ENCODE measurements at regions of chr4 and their contacts with region 1.

Region 1: DNA sequence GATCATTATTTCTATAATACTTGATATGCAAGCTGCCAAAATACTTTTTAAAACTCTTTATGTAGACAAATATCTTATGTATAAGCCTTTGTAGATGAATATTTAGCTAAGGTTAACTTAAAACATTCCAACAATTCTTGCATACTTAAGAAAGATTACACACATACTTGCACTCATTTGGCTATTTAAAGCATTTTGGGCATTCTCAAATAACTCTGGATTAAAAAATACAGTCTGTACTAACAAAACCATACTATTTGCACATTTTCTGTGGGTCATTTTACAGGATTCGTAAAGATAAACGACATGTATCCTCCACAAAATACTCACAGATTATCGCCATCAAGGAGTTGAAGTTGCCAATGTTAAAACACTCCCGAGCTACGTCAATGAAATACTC is 26.5 kb downstream of the RASGEF1B start:
- DNase-seq: no peak
- H3K4me3 ChIP-seq: no peak overlapping the region
- H3K27ac ChIP-seq: no peak overlapping the region
- H3K27me3 ChIP-seq: no peaks in the 10 kb centered on the region
- CTCF ChIP-seq: no peak

Region 2: DNA sequence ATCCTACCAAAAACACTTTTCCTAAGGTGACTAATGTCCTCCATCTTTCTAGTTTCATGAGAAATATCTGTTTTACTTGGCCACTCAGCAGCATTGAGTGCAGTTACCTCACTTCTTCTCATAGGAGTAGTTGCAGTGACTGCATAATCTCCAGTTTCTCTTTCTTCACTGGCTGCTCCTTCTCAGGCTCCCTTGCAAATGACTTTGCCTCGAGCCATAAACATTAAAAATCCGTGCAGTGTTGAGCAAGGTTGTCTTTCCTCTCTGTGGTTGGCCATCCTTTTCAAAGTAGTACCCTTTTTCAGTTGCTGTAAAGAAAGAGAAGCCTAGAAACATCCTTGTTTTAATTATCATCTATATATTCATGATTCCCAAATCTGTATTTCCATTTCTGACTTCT is 219.9 kb before region 1 on chr4:
- CTCF ChIA-PET with region 1: no interaction called
- POLR2A ChIA-PET with region 1: no interaction called
- DNase-seq: no peak
- H3K4me3 ChIP-seq: no peak overlapping the region
- H3K27ac ChIP-seq: no peak overlapping the region
- H3K27me3 ChIP-seq: no peaks in the 10 kb centered on the region
- CTCF ChIP-seq: no peak

Region 3: DNA sequence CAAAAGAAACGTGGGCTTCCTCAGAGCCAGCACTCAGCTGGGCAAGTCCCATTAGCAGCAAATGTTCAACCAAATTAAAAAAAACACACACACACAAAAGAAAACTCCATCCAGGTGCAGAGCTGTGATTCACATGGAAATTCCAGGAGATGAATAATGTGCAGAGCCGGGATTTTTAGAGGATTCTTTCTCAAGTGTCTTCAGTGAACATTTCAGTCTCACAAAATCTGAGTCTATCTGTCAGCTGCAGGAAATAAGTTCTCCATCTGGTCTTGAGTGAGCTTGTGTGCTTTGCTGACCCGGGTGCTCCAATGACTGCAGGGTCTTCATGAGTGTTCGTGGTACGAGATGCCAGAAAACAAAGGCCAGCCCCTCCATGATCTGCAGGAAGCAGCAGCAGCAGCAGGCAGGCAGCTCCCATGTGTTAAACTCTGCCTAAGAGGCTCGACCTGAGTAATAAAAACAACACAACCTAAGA is 17.8 kb before region 1 on chr4:
- CTCF ChIA-PET with region 1: no interaction called
- POLR2A ChIA-PET with region 1: interaction called, 12 read pairs
- DNase-seq: no peak
- H3K4me3 ChIP-seq: no peak overlapping the region
- H3K27ac ChIP-seq: no peak overlapping the region
- H3K27me3 ChIP-seq: peaks cover 2% of the 10 kb centered on the region
- CTCF ChIP-seq: no peak

Measured in AG04450 (cell line).